ENCODE measurements at regions of chr16 and their contacts with region 1.

Region 1: GRCh38 chr16:8850279-8850885 is 18.4 kb downstream of the CARHSP1 start:
- DNase-seq: peak in 1 of 2 donors; percentile 44
- ATAC-seq: peak; percentile 61 to 69
- H3K4me3 ChIP-seq: no peak overlapping the region
- H3K27ac ChIP-seq: peak overlapping the region; percentile 9 to 63 (median 50)
- H3K4me1 ChIP-seq: peaks cover 5 to 7% of the 10 kb centered on the region in 2 donors
- H3K27me3 ChIP-seq: no peaks in the 10 kb centered on the region
- CTCF ChIP-seq: no peak
- POLR2A ChIP-seq: peak in 1 of 2 donors; percentile 8

Region 2: GRCh38 chr16:8806272-8806983 is 44.0 kb before region 1 on chr16:
- in situ Hi-C with region 1: loop called in 1 of 4 experiments (anchors 10 kb)
- intact Hi-C with region 1: no loop called
- DNase-seq: no peak
- ATAC-seq: no peak
- H3K4me3 ChIP-seq: no peak overlapping the region
- H3K27ac ChIP-seq: no peak overlapping the region
- H3K4me1 ChIP-seq: no peaks in the 10 kb centered on the region
- H3K27me3 ChIP-seq: no peaks in the 10 kb centered on the region
- CTCF ChIP-seq: no peak
- POLR2A ChIP-seq: no peak